Heart left ventricle (tissue), 16 donors: ENCODE measurements at regions of chr1 and their contacts with region 1.

Region 1: GRCh38 chr1:45148209-45148825 is 58.1 kb downstream of the ZSWIM5 start:
- DNase-seq: no peak
- ATAC-seq: no peak
- H3K4me3 ChIP-seq: no peak overlapping the region
- H3K27ac ChIP-seq: no peak overlapping the region
- H3K4me1 ChIP-seq: peaks cover 0 to 3% (median 0%) of the 10 kb centered on the region in 12 donors
- H3K27me3 ChIP-seq: no peaks in the 10 kb centered on the region
- CTCF ChIP-seq: no peak
- POLR2A ChIP-seq: no peak

Region 2: GRCh38 chr1:45122724-45123123 is 25.6 kb before region 1 on chr1:
- intact Hi-C with region 1: no loop called
- DNase-seq: no peak
- ATAC-seq: no peak
- H3K4me3 ChIP-seq: no peak overlapping the region
- H3K27ac ChIP-seq: no peak overlapping the region
- H3K4me1 ChIP-seq: no peaks in the 10 kb centered on the region
- H3K27me3 ChIP-seq: no peaks in the 10 kb centered on the region
- CTCF ChIP-seq: no peak
- POLR2A ChIP-seq: no peak

Region 3: GRCh38 chr1:45403298-45403697 is 255.0 kb after region 1 on chr1:
- intact Hi-C with region 1: loop called in 1 of 10 experiments (anchors 10 kb)
- DNase-seq: no peak
- ATAC-seq: no peak
- H3K4me3 ChIP-seq: no peak overlapping the region
- H3K27ac ChIP-seq: peak overlapping the region in 1 of 12 donors; percentile 2
- H3K4me1 ChIP-seq: peaks cover 0 to 1% (median 0%) of the 10 kb centered on the region in 12 donors
- H3K27me3 ChIP-seq: no peaks in the 10 kb centered on the region
- CTCF ChIP-seq: no peak
- POLR2A ChIP-seq: no peak